GM12878 (cell line): ENCODE measurements at regions of chr3 and their contacts with region 1.

Region 1: DNA sequence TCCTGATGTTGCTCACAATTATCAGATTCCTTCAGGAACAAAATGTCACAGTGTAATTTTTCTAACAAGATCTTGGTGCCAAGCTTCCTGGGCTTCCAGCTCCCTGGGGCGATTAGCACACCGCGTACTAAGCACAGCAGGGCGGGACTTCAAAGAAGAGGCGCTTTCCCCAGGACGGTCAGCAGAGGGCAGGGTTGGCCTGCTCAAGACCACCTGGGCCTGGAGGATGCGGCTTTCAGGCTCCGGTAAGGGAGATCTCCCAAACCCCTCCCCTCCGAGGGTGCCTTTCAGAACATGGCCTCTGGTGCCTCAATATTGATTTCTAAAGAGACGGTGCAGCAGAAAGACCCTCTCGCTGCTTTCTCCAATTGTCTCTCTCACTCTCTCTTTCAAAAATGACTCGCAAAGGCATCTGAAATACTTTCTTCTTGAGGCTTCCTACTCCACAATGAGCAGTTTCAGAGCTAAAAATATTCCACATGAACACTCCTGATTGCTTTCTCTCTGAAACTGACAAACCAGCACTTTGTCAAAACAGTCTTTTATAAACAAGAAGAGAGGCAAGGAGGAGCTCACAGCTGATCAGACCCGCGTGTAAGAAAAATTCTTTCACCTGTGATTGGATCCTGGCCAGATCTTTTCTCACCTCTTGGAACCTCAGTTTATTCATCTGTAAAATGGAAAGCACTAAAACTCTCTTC is 154.0 kb downstream of the ADAMTS9 start:
- DNase-seq: peak; percentile 7
- ATAC-seq: peak; percentile 99
- H3K4me3 ChIP-seq: no peak overlapping the region
- H3K27ac ChIP-seq: no peak overlapping the region
- H3K4me1 ChIP-seq: no peaks in the 10 kb centered on the region
- H3K27me3 ChIP-seq: 0 out of 4 replicates have a peak, but pooled peaks cover 0 to 2% of the 10 kb centered on the region in 2 experiments
- CTCF ChIP-seq: peak; percentile 84 to 90 (median 84)
- EP300 ChIP-seq: no peak
- POLR2A ChIP-seq: no peak
- RAD21 ChIP-seq: peak; percentile 88

Region 2: GRCh38 chr3:64518950-64519349 is 14.8 kb before region 1 on chr3:
- CTCF ChIA-PET with region 1: interaction called, 38 read pairs
- POLR2A ChIA-PET with region 1: no interaction called
- RAD21 ChIA-PET with region 1: interaction called, 4 read pairs
- SMC1A ChIA-PET with region 1: interaction called, 5 read pairs
- in situ Hi-C with region 1: no loop called
- intact Hi-C with region 1: no loop called
- DNase-seq: no peak
- ATAC-seq: no peak
- H3K4me3 ChIP-seq: no peak overlapping the region
- H3K27ac ChIP-seq: no peak overlapping the region
- H3K4me1 ChIP-seq: no peaks in the 10 kb centered on the region
- H3K27me3 ChIP-seq: no peaks in the 10 kb centered on the region
- CTCF ChIP-seq: no peak
- EP300 ChIP-seq: no peak
- POLR2A ChIP-seq: no peak
- RAD21 ChIP-seq: no peak

Region 3: GRCh38 chr3:65342084-65342683 is 808.4 kb after region 1 on chr3:
- CTCF ChIA-PET with region 1: interaction called, 4 read pairs
- POLR2A ChIA-PET with region 1: no interaction called
- RAD21 ChIA-PET with region 1: no interaction called
- SMC1A ChIA-PET with region 1: no interaction called
- in situ Hi-C with region 1: no loop called
- intact Hi-C with region 1: loop called (anchors 5 kb)
- DNase-seq: no peak
- ATAC-seq: peak; percentile 92
- H3K4me3 ChIP-seq: no peak overlapping the region
- H3K27ac ChIP-seq: no peak overlapping the region
- H3K4me1 ChIP-seq: no peaks in the 10 kb centered on the region
- H3K27me3 ChIP-seq: no peaks in the 10 kb centered on the region
- CTCF ChIP-seq: peak; percentile 59 to 75 (median 63)
- EP300 ChIP-seq: no peak
- POLR2A ChIP-seq: no peak
- RAD21 ChIP-seq: peak; percentile 36; the same call in 1 of the 2 replicates

Region 4: DNA sequence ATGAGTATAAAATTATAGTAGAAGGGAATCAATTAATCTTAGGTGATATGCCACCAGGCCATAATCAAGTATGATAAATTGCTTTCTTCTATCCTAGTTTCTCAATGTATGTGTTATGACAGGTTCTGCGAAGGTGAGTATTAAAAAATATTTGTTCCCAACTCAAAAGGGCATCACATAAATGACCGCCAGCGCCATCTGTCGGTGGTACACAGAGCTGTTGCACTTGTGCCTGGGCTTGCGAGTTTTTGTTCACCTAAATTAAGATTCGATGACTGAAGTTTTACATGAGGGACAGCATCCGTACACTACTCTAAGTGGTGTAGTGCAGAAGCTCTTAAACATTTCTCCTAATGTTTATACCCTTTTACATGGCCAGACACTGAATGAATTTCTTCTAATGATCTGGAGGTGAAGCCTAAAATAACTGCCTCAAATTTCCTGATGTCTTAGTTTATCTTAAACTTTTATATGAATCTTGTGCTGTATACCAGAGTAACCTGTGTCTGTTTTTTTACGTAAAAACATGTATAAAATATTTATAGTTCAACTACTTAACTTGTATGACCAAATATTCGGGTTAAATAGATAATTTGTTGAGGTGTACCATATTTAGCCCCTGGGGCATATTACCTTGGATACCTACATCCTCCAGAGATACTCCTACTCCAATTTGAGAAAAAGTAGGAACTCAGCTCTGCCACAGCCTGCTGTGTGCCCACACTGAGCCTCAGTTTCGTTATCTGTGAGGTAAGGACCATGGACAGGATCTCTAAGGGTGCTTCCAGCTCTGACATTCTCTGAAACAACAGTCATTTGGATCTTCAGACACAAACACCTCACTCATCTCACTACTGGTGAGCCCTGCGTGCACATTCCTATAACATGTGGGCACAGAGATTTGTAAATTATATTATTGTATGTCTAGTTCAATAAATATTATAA is 1139.4 kb after region 1 on chr3:
- CTCF ChIA-PET with region 1: interaction called, 29 read pairs
- POLR2A ChIA-PET with region 1: no interaction called
- RAD21 ChIA-PET with region 1: interaction called, 3 read pairs
- SMC1A ChIA-PET with region 1: interaction called, 5 read pairs
- in situ Hi-C with region 1: loop called (anchors 5 kb)
- intact Hi-C with region 1: loop called (anchors 1 kb)
- DNase-seq: no peak
- ATAC-seq: peak; percentile 74
- H3K4me3 ChIP-seq: no peak overlapping the region
- H3K27ac ChIP-seq: no peak overlapping the region
- H3K4me1 ChIP-seq: no peaks in the 10 kb centered on the region
- H3K27me3 ChIP-seq: no peaks in the 10 kb centered on the region
- CTCF ChIP-seq: peak; percentile 59 to 76 (median 76)
- EP300 ChIP-seq: no peak
- POLR2A ChIP-seq: no peak
- RAD21 ChIP-seq: peak; percentile 56

Region 5: DNA sequence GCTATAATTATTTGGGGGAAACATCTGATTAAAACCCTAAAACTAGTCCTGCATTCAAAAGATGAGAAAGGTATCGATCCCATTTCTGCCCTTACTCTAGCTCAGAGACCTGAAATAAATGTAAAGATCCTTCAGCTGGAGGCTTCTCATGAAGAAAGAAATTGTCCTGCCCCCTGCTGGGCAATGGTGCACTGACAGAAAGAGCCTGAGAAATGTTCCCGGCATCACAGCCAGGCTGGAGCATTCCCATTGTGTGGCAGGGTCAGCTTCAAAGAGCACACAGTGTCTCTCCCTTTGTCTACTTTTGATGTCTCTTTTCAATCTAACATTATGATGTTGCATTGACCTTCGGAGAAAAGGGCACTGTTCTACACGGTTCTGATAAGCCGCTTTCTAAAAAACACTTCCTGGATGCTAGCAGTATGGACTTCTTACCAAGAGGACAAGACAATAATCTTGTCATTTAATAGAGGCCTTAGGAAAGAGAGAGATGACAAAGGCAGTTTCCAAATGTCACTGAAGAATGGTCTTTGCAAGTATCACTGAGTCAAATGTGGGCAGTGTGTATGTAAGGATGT is 1217.4 kb after region 1 on chr3:
- CTCF ChIA-PET with region 1: interaction called, 40 read pairs
- POLR2A ChIA-PET with region 1: no interaction called
- RAD21 ChIA-PET with region 1: interaction called, 7 read pairs
- SMC1A ChIA-PET with region 1: interaction called, 10 read pairs
- in situ Hi-C with region 1: no loop called
- intact Hi-C with region 1: no loop called
- DNase-seq: no peak
- ATAC-seq: peak; percentile 65
- H3K4me3 ChIP-seq: no peak overlapping the region
- H3K27ac ChIP-seq: no peak overlapping the region
- H3K4me1 ChIP-seq: no peaks in the 10 kb centered on the region
- H3K27me3 ChIP-seq: no peaks in the 10 kb centered on the region
- CTCF ChIP-seq: peak; percentile 43 to 59 (median 56)
- EP300 ChIP-seq: no peak
- POLR2A ChIP-seq: no peak
- RAD21 ChIP-seq: 0 out of 2 replicates have a peak, but pooled peaks have one; percentile 17